ENCODE measurements at regions of chr1 and their contacts with region 1.

Region 1: GRCh38 chr1:113380075-113380474 is 10.2 kb upstream of the MAGI3 start:
- DNase-seq: no peak
- H3K4me3 ChIP-seq: no peak overlapping the region
- H3K27ac ChIP-seq: no peak overlapping the region
- H3K4me1 ChIP-seq: peaks cover 6% of the 10 kb centered on the region
- H3K27me3 ChIP-seq: no peaks in the 10 kb centered on the region
- CTCF ChIP-seq: no peak

Region 2: DNA sequence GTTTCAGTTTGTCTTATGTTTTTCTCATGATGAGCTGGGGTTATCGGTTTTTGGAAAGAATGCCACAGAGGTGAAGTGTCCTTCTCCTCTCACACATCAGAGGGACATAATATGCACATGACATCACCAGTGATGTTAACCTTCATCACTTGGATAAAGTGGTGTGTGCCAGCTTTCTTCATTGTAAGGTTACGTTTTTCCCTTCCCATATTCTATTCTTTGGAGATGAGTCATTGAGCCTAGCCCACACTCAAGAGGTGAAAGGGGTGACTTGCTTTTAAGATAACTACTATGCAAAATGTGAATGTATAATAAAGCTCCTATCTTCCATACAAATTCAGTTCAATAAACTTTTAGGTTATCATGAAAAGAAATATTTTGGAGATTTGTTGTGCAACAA is 26.5 kb before region 1 on chr1:
- CTCF ChIA-PET with region 1: no interaction called
- dilution Hi-C with region 1: loop called (anchors 5 kb)
- in situ Hi-C with region 1: no loop called
- intact Hi-C with region 1: no loop called
- DNase-seq: peak; percentile 4
- H3K4me3 ChIP-seq: no peak overlapping the region
- H3K27ac ChIP-seq: no peak overlapping the region
- H3K4me1 ChIP-seq: no peaks in the 10 kb centered on the region
- H3K27me3 ChIP-seq: no peaks in the 10 kb centered on the region
- CTCF ChIP-seq: no peak

Region 3: DNA sequence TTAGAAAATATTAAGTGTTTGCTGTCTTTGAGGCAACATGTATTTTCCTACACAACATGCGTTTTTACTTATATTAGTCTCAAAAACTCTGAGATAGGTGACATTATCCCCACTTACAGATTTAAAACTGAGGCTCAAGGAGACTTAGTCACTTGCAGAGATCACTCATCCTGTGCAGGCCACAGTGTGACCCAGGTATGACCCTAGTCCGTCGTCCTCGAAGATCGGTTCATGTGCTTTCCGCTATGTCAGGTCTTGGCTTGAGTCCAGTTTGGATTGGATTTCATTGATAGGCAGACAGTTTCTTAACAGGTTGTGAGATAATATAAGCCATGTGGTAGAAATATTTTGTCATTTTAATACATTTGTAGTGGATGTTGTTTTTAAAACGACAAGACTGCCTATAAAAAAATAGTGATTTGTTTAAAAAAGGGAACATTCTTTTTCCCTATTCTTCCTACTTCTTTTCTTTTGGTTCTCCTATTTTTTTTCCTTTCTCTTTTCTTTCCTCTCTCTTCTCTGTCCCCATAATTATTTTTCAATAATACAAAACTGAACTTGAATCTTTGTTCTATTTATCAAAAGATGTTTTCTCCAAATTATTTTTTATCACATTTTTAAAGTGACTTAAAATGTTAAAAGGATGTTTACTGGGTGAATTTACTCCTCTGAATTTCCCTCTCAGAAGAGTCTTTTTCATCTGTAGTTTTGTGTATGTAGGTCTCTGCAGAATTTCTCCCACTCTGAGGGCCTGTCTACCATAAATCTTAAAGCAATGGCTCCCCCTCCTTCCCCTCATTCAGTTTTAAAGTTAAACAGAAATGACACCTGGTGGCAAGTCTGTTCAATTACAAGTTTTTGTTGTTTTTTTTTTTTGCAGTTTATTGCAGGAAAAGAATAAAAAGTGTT is 297.4 kb after region 1 on chr1:
- CTCF ChIA-PET with region 1: no interaction called
- dilution Hi-C with region 1: no loop called
- in situ Hi-C with region 1: no loop called
- intact Hi-C with region 1: no loop called
- DNase-seq: peak; percentile 11
- H3K4me3 ChIP-seq: no peak overlapping the region
- H3K27ac ChIP-seq: no peak overlapping the region
- H3K4me1 ChIP-seq: no peaks in the 10 kb centered on the region
- H3K27me3 ChIP-seq: no peaks in the 10 kb centered on the region
- CTCF ChIP-seq: peak; percentile 31 to 55